Right cardiac atrium (tissue), 5 donors: ENCODE measurements at regions of chr4 and their contacts with region 1.

Region 1: DNA sequence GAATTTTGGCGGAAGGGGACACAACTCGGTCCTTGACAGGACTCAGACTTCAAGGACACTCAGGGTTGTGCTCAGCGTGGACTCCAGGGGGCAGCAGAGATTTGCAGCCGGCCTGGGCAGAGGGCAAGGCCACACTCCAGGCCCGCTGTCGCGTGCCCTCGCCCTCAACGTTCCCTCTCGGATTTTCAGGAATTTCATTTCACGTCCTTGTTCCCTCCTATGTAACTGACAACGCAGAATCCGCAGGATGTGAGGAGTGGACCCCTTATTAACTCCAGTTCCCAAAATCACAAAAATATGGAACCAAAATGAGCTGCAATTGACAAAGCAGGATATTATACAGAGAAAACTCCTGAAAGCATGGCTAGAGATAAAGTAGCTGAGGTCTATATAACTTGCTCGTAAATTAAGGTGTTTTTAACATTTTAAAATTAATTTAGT is 21.0 kb upstream of the DCTD start:
- DNase-seq: peak; percentile 66 to 89 (median 88)
- ATAC-seq: peak; percentile 98
- H3K4me3 ChIP-seq: no peak overlapping the region
- H3K27ac ChIP-seq: no peak overlapping the region
- H3K4me1 ChIP-seq: no peaks in the 10 kb centered on the region
- H3K27me3 ChIP-seq: no peaks in the 10 kb centered on the region

Region 2: GRCh38 chr4:183059797-183060196 is 121.6 kb after region 1 on chr4:
- intact Hi-C with region 1: loop called in 1 of 4 experiments (anchors 10 kb)
- DNase-seq: no peak
- ATAC-seq: no peak
- H3K4me3 ChIP-seq: no peak overlapping the region
- H3K27ac ChIP-seq: no peak overlapping the region
- H3K4me1 ChIP-seq: no peaks in the 10 kb centered on the region
- H3K27me3 ChIP-seq: no peaks in the 10 kb centered on the region

Region 3: DNA sequence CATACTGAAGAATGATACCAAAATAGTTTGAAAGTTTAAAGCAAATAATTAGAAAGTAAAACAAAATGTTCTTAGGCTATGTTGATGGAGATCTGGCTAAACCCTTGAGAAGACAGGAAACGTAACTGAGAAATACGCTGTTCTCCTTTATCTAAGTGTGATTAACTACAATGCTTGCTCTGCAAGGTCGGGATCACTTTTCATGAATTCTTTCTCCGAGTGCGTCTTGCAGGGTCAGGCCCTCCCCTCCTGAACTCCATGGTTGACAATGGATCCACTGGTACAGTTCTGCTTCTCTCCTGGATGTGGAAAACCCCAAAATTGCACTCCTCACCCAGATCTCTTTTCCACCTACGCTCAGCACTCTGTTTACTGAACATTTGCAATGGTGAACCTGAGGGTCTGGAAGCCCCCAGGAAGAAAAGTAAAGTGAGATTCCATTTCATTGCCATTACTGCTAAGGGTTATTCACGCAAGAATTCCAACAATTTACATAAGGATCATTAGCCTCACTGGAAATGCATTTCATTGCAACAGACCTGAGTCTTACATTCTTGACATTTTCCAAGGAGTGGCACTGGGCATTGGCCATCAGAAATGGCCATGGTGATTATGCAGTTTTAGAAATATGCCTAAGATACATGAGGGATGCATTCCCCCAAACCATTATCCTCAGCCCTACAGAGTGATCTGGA is 136.2 kb after region 1 on chr4:
- intact Hi-C with region 1: loop called (anchors 10 kb)
- DNase-seq: no peak
- ATAC-seq: no peak
- H3K4me3 ChIP-seq: no peak overlapping the region
- H3K27ac ChIP-seq: no peak overlapping the region
- H3K4me1 ChIP-seq: no peaks in the 10 kb centered on the region
- H3K27me3 ChIP-seq: no peaks in the 10 kb centered on the region

Region 4: GRCh38 chr4:183158062-183158461 is 219.8 kb after region 1 on chr4:
- intact Hi-C with region 1: no loop called
- DNase-seq: no peak
- ATAC-seq: no peak
- H3K4me3 ChIP-seq: no peak overlapping the region
- H3K27ac ChIP-seq: no peak overlapping the region
- H3K4me1 ChIP-seq: peaks cover 8% of the 10 kb centered on the region
- H3K27me3 ChIP-seq: no peaks in the 10 kb centered on the region

Region 5: DNA sequence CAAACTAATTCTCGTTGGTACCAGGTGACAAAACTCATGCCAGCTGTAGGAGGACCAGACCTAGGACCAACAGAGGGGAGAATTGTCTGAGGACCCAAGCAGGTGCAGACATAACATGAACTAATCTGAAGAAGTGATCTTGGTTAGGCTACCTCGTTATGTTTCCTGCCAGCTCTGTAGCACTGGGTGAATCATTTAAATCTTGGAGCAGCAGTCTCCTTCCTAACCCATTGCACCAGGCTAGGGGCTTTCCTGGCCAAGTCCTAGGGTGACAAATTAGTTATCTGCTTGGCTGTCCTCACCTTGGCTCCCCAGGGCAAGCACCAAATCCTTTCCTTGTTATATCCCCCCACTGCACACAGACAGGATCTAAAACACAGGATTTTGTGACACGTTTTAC is 248.6 kb after region 1 on chr4:
- intact Hi-C with region 1: no loop called
- DNase-seq: no peak
- ATAC-seq: no peak
- H3K4me3 ChIP-seq: no peak overlapping the region
- H3K27ac ChIP-seq: no peak overlapping the region
- H3K4me1 ChIP-seq: peaks cover 3% of the 10 kb centered on the region
- H3K27me3 ChIP-seq: no peaks in the 10 kb centered on the region

Region 6: DNA sequence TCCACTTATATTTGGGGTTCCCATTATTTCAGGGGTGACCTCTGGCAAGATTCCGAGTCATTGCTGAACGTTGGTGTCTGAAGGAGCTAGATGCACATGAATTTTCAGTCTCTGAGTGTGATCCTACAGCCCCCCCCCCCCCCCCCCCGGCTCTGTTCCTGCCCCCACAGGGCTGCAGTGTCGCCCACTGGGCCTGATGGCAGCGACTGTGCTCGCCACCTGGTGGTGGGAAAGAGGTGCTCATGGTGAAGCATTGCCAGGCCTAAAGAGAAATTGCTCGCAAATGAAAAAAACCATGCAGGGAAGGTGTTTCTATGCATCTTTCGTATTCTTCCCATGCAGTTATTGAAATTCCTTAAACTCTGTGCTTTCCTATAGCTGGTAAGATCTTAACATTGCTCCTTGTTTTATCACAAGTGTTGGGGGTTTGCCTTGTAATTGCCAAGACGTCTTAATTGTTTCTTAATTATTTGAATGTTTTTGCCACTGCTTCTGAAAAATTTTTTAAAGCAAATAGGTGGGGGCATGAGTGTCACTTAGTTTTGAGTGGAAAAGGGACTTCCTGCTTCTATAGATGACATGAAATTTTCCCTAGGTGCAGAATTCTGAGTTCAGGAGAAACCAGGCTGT is 318.6 kb after region 1 on chr4:
- intact Hi-C with region 1: loop called (anchors 2 to 10 kb)
- DNase-seq: peak; percentile 62 to 87 (median 79)
- ATAC-seq: peak; percentile 86 to 88
- H3K4me3 ChIP-seq: no peak overlapping the region
- H3K27ac ChIP-seq: no peak overlapping the region
- H3K4me1 ChIP-seq: no peaks in the 10 kb centered on the region
- H3K27me3 ChIP-seq: no peaks in the 10 kb centered on the region

Region 7: GRCh38 chr4:183261953-183262775 is 323.9 kb after region 1 on chr4:
- intact Hi-C with region 1: loop called (anchors 2 to 10 kb)
- DNase-seq: peak; percentile 75 to 91 (median 81)
- ATAC-seq: peak; percentile 91 to 95
- H3K4me3 ChIP-seq: no peak overlapping the region
- H3K27ac ChIP-seq: no peak overlapping the region
- H3K4me1 ChIP-seq: no peaks in the 10 kb centered on the region
- H3K27me3 ChIP-seq: no peaks in the 10 kb centered on the region